Sciatic nerve (tissue), 2 donors: ENCODE measurements at regions of chr19 and their contacts with region 1.

Region 1: GRCh38 chr19:45437328-45437727 is 13.6 kb upstream of the ERCC1 start:
- DNase-seq: no peak
- ATAC-seq: no peak

Region 2: DNA sequence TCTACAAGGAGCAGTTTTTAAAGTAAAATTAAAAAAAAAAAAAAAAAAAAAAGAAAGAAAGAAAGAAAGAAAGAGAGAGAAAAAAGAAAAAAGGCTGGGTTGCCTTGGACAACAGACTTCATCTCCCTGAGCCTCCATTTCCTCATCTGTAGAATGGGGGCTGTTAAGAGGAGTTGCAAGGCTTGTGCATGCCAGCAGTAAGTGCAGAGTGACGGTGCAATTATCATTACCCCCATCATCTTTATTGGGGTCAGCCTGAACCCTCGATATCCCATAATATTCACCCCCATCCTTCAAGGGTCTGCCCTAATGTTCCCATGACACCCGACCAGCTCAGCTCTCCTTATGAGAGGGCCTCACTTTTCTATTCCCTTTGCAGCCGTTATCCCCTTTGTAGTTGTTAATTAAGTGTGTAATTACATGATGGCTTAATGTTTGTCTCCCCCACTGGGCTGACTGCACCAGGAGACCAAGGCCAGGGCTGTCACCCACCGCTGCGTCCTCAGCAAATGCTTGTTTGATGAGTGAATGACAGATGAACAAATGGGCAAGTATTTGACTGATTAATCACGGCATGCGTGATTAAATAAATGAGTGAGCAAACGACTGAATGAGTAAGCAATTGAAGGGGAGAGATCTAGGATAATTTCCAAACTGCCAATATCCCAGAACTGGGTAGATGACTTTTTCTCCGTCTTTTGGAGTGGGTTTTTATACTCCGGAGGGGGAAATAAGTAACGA is 40.6 kb after region 1 on chr19:
- intact Hi-C with region 1: loop called (anchors 2 kb)
- DNase-seq: no peak
- ATAC-seq: peak; percentile 3